AG04449 (cell line): ENCODE measurements at regions of chr1 and their contacts with region 1.

Region 1: GRCh38 chr1:9784508-9785133 is 39.1 kb downstream of the CLSTN1 start:
- DNase-seq: no peak
- H3K4me3 ChIP-seq: no peak overlapping the region
- CTCF ChIP-seq: peak; percentile 56

Region 2: DNA sequence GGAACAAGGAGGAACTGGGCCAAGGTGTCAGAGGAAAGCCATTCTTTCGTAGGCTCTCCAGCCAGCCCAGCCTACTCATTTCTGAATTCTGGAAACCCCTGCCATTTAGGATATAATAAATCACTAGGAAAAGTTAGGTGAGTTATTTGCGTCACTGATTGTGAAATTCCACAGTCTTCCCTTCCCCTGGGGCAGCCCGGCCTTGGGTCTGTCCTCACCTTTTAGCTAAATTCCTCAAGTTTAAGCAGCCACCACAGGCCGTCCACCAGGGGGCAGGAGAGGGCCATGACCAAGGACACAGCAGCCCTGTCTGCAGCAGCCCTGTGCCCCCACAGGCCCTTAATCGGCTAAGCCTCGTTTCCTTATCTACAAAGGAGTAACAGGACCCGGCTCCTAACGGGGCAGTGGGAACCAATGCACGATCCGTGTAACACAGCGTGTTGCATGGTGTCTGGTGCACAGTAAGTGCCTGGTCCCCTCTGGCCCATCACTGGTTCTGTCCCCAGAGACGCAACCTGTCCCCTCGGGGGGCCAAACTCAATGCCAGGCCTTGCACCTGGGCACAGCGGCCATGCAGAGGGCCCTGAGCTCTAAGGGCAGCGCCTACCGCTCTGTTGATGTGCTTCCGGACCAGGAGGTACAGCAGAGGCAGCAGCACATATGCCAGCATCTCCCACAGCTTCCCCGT is 673.8 kb before region 1 on chr1:
- CTCF ChIA-PET with region 1: no interaction called
- POLR2A ChIA-PET with region 1: no interaction called
- DNase-seq: peak; percentile 34
- H3K4me3 ChIP-seq: no peak overlapping the region
- CTCF ChIP-seq: peak; percentile 92

Region 3: DNA sequence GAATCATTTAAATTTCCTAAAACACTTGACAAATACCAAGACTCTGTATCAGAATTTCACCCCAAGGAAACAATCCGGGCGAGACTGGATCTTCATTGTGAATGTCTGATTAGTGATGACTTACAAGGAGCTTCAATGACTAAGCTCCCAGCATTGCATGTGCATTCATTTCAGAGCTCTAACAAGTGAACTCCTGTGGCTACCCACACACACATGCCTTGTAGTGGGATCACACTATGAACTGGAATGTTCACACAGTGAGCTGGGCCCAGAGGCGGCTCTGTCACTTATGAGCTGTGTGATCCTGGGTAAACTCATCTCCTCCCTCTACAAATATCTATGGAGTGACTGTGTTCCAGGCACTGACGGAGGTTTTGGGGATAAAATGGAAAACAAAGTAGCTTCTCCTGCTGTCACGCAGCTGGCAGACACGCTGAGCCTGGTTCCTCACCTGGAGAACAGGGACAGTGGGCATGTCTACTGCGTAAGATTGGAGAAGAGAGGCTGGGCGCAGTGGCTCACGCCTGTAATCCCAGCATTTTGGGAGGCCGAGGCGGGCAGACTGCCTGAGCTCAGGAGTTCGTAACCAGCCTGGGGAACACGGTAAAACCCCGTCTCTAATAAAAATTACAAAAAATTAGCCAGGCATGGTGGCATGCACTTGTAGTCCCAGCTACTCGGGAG is 17.7 kb before region 1 on chr1:
- CTCF ChIA-PET with region 1: interaction called, 13 read pairs
- POLR2A ChIA-PET with region 1: interaction called, 3 read pairs
- DNase-seq: peak; percentile 100
- H3K4me3 ChIP-seq: no peak overlapping the region
- CTCF ChIP-seq: no peak

Region 4: DNA sequence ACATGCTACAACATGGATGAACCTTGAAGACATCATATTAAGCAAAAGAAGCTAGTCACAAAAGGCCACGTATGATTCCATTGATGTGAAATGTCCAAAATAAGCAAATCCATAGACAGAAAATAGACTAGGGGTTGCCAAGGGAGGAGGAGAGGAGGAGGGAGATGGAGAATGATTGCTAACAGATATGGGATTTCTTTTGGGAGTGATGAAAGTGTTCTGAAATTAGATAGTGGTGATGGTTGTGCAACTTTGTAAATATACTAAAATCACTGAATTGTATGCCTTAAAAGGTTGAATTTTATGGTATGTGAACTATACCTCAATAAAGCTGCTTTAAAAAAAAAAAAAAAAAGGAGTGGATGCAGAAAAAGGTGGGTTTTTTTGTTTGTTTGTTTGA is 31.6 kb after region 1 on chr1:
- CTCF ChIA-PET with region 1: interaction called, 16 read pairs
- POLR2A ChIA-PET with region 1: no interaction called
- DNase-seq: no peak
- H3K4me3 ChIP-seq: no peak overlapping the region
- CTCF ChIP-seq: no peak